Posterior vena cava (tissue), 2 donors: ENCODE measurements at regions of chr12 and their contacts with region 1.

Region 1: GRCh38 chr12:127401005-127401404 is 866.0 kb upstream of the TMEM132C start:
- DNase-seq: no peak

Region 2: GRCh38 chr12:127343940-127344339 is 57.1 kb before region 1 on chr12:
- intact Hi-C with region 1: loop called in 1 of 2 experiments (anchors 2 kb)
- DNase-seq: no peak